Esophagus muscularis mucosa (tissue), 4 donors: ENCODE measurements at regions of chr15 and their contacts with region 1.

Region 1: DNA sequence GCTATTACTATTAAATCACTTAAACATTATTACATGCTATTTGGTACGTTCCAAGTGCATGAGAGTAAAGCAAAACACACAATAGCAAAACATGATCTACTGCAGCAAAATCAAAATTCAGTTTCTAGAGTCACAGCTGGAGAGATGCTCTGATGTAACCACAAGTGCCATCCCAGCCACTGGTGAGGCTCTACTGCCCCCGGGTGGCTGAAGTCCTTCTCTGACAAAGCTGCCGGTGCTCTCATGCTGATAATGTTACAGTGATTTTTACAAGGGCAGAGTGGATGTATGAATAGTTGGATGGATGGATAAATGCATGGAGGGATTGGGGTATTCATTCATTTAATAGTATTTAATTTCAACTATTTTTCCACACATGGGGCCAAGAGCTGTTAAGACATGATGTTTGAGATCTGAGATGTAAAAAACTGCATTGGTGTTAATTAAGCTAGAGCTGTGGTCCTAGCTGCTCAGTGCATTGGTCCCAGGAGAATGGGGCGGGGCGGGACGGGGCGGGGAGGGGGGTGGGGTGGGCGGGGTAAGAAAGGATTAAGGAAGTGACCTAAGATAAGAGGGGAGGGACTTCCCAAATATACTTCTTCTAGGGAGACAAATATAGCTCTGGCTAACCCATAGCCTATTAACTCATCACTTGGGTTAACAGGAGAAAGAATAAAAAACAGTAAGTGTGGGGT is 5.3 kb upstream of the SPESP1 start:
- DNase-seq: no peak
- H3K4me3 ChIP-seq: no peak overlapping the region
- H3K27ac ChIP-seq: no peak overlapping the region
- H3K4me1 ChIP-seq: no peaks in the 10 kb centered on the region
- H3K27me3 ChIP-seq: peaks cover 0 to 22% (median 0%) of the 10 kb centered on the region in 4 donors
- CTCF ChIP-seq: peak; percentile 68 to 79 (median 68)
- EP300 ChIP-seq: no peak
- POLR2A ChIP-seq: no peak

Region 2: DNA sequence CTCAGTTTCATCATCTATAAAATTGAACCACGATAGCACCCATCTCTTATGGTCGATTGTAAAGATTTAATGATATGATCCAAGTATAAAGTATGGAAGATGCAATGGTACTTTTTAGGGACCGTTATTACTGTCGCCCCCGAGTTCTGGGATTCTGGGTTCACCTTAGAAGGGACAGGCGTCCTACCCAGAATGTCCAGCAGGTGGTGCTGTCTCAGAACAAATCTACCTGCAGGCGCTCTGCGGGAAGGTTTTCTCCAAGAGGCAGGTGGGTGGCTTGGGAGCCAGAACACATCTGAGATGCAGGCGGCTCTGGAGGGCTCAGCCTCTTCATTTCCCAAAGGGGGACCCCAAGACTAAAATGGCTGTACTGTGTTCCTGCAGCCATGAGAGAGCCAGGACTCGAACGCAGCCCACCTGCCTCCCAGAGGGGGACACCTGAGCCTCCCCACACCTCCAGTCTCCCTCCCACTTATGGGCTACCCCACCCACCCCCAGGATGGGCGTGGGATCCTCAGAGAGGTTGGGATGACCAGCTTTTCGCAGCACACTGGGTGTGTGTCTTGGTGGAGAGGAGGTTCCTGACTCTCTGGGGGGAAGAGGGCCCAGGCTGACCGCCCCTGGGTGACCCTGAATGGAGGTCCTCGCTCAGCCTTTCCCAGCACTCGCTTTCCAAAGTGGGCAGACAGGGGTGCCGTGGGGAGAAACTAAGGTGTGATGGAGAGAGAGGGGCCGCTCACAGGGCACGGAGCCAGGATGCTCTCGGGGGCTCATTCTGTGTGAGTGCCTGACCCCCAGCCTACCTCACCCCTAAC is 374.3 kb before region 1 on chr15:
- intact Hi-C with region 1: loop called (anchors 5 kb)
- DNase-seq: peak; percentile 92
- H3K4me3 ChIP-seq: no peak overlapping the region
- H3K27ac ChIP-seq: no peak overlapping the region
- H3K4me1 ChIP-seq: no peaks in the 10 kb centered on the region
- H3K27me3 ChIP-seq: peaks cover 0 to 50% (median 0%) of the 10 kb centered on the region in 4 donors
- CTCF ChIP-seq: peak; percentile 82 to 99 (median 91)
- EP300 ChIP-seq: no peak
- POLR2A ChIP-seq: no peak

Region 3: GRCh38 chr15:68862415-68862814 is 62.6 kb before region 1 on chr15:
- intact Hi-C with region 1: no loop called
- DNase-seq: no peak
- H3K4me3 ChIP-seq: no peak overlapping the region
- H3K27ac ChIP-seq: no peak overlapping the region
- H3K4me1 ChIP-seq: no peaks in the 10 kb centered on the region
- H3K27me3 ChIP-seq: peaks cover 0 to 6% (median 0%) of the 10 kb centered on the region in 4 donors
- CTCF ChIP-seq: no peak
- EP300 ChIP-seq: no peak
- POLR2A ChIP-seq: no peak

Region 4: DNA sequence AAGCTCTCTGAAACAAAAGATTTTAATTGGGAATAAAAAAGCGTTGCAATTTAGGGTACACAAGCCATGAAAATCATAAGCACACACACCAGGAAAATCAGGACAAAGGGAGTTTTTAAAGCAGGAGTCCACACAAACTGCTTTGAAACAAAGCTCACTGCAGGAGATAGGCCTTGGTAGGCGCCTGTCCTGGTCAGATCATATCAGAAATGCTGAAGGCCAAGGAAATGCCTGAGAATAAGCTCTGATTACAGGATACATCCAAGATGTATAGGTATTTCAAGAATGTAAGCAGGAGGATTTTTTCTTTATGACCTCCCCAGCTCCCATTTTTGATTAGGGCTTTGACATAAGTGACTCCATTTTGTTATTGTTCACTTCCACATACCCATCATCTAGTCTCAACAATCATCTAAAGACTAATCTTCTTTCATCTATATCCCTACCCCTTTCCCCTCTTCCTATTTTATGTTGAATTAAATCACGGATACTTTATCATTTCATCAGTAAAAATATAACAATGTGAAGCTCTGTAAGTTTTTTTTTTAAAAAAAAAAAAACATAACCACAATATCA is 24.0 kb after region 1 on chr15:
- intact Hi-C with region 1: no loop called
- DNase-seq: no peak
- H3K4me3 ChIP-seq: no peak overlapping the region
- H3K27ac ChIP-seq: no peak overlapping the region
- H3K4me1 ChIP-seq: no peaks in the 10 kb centered on the region
- H3K27me3 ChIP-seq: peaks cover 0 to 15% (median 0%) of the 10 kb centered on the region in 4 donors
- CTCF ChIP-seq: no peak
- EP300 ChIP-seq: no peak
- POLR2A ChIP-seq: no peak